ENCODE measurements at regions of chr22 and their contacts with region 1.

Region 1: DNA sequence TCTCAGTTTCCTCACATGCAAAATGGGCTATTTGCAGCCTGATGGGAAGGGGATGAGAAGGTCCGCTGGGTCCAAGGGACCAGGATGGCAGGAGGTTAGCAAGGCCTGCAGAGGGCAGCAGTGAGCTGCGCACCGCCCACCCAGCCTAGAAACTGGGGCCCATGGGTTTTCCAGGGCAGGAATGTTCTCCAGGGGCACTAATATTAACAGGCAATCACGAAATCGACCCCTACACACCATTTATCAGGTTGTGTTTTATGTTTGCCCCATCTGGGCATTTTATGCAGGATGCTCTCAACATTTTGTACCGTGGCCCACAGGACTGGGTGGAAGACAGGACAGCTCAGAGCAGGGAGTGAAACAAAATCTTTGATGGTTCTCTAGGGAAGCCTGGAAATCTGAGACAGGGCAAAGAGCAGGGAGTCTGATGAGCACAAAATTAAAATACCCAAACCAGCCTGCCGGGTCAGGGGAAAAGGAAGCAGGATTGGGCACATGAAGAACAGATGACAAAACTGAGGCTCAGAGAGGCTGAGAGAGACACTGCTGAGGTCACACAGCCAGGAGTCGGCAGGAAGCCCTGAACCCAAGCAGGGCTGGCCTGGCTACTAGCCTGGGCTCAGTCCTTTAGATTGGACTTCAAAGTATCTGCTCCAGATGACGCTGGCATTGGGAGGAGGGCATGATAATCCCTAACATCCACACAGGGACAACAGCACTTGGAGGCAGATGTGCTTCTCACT is 1.6 kb upstream of the BCR start:
- DNase-seq: peak in 4 of 5 donors; percentile 57
- H3K4me3 ChIP-seq: no peak overlapping the region
- H3K4me3 Mint-ChIP-seq: peak overlapping the region; percentile 63 to 84 (median 82)
- H3K27ac ChIP-seq: peak overlapping the region; percentile 27
- H3K27ac Mint-ChIP-seq: peak overlapping the region; percentile 88 to 95 (median 90)
- H3K4me1 ChIP-seq: peaks cover 70% of the 10 kb centered on the region
- H3K4me1 Mint-ChIP-seq: peaks cover 39 to 60% (median 52%) of the 10 kb centered on the region in 4 donors
- H3K27me3 ChIP-seq: no peaks in the 10 kb centered on the region
- H3K27me3 Mint-ChIP-seq: no peaks in the 10 kb centered on the region

Region 2: GRCh38 chr22:23047265-23047664 is 131.4 kb before region 1 on chr22:
- CTCF ChIA-PET with region 1: no interaction called
- POLR2A ChIA-PET with region 1: no interaction called
- intact Hi-C with region 1: no loop called
- DNase-seq: no peak
- H3K4me3 ChIP-seq: no peak overlapping the region
- H3K4me3 Mint-ChIP-seq: no peak overlapping the region
- H3K27ac ChIP-seq: no peak overlapping the region
- H3K27ac Mint-ChIP-seq: no peak overlapping the region
- H3K4me1 ChIP-seq: no peaks in the 10 kb centered on the region
- H3K4me1 Mint-ChIP-seq: no peaks in the 10 kb centered on the region
- H3K27me3 ChIP-seq: no peaks in the 10 kb centered on the region
- H3K27me3 Mint-ChIP-seq: peaks cover 13 to 21% of the 10 kb centered on the region in 2 donors

Region 3: DNA sequence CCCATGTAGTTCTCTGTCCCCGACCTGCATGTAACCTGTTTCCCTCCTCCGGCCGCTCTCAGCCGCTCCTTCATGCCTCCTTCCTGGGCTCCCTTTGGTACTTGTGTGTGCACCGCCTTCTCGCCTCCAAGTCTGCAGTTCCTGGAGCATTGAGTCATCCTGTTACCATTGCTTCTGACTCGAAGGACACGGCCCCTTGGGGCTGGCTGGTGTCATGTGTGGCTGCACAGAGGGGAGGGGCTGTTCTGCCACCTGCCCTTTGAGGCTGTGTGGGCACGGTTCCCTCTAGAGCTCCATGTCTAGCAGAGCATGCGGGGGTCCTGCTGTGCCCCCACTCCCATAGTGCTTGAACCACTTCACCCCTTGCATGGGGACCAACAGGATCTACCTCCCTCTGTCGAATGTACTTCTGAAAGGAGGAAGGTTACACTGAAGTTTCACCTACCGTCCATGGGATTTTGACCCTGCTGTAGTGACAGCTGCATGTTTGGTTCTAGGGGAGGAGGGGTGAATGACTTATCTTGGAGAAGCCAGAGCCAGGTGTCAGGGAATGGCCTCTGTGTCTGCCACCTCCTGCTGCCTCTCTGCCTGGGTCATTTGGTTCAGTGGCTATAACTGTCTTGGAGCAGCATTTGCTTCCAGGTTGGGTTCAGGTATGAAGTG is 41.3 kb after region 1 on chr22:
- CTCF ChIA-PET with region 1: interaction called, 3 read pairs
- POLR2A ChIA-PET with region 1: interaction called, 31 read pairs
- intact Hi-C with region 1: loop called (anchors 5 kb)
- DNase-seq: peak in 3 of 5 donors; percentile 21 to 68 (median 22)
- H3K4me3 ChIP-seq: no peak overlapping the region
- H3K4me3 Mint-ChIP-seq: peak overlapping the region; percentile 71 to 89 (median 84)
- H3K27ac ChIP-seq: peak overlapping the region; percentile 44
- H3K27ac Mint-ChIP-seq: peak overlapping the region; percentile 85 to 96 (median 93)
- H3K4me1 ChIP-seq: peaks cover 100% of the 10 kb centered on the region
- H3K4me1 Mint-ChIP-seq: peaks cover 75 to 100% (median 95%) of the 10 kb centered on the region in 4 donors
- H3K27me3 ChIP-seq: no peaks in the 10 kb centered on the region
- H3K27me3 Mint-ChIP-seq: no peaks in the 10 kb centered on the region

Region 4: DNA sequence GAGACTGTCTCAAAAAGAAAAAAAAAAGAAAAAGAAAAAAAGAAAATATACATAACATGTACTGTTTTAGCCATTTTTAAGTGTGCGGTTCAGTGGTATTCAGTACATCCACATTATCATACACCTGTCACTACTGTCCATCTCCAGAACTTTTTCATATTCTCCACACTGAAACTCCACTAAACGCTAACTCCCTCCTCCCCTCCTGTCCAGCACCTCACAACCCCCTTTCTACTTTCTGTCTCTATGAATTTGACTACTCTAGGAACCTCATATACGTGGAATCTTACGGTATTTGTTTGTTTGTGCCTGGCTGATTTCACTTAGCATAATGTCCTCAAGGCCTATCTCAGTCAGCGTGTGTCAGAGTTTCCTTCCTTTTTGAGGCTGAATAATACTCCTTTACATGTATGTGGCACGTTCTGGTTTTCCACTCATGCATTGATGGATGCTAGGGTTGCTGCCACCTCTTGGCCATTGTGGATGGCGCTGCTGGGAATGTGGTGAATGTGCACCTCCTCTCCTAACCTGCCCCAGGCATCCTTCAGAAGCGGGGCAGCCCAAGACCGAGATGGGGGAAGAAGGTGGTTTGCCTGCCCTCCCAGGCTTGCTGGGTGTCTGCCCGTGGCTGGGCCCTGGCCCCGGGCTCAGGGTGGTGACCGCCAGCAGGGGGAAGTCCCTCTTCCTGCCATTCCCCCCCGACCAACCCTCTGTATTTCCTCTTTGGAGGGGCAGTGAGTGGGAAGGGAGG is 62.1 kb after region 1 on chr22:
- CTCF ChIA-PET with region 1: interaction called, 8 read pairs
- POLR2A ChIA-PET with region 1: interaction called, 17 read pairs
- intact Hi-C with region 1: loop called (anchors 1 kb)
- DNase-seq: peak in 2 of 5 donors; percentile 25 to 66
- H3K4me3 ChIP-seq: no peak overlapping the region
- H3K4me3 Mint-ChIP-seq: peak overlapping the region in 6 of 8 donors; percentile 13 to 69 (median 36)
- H3K27ac ChIP-seq: peak overlapping the region; percentile 73
- H3K27ac Mint-ChIP-seq: peak overlapping the region; percentile 84 to 99 (median 92)
- H3K4me1 ChIP-seq: peaks cover 75% of the 10 kb centered on the region
- H3K4me1 Mint-ChIP-seq: peaks cover 48 to 94% (median 74%) of the 10 kb centered on the region in 4 donors
- H3K27me3 ChIP-seq: no peaks in the 10 kb centered on the region
- H3K27me3 Mint-ChIP-seq: no peaks in the 10 kb centered on the region

Region 5: DNA sequence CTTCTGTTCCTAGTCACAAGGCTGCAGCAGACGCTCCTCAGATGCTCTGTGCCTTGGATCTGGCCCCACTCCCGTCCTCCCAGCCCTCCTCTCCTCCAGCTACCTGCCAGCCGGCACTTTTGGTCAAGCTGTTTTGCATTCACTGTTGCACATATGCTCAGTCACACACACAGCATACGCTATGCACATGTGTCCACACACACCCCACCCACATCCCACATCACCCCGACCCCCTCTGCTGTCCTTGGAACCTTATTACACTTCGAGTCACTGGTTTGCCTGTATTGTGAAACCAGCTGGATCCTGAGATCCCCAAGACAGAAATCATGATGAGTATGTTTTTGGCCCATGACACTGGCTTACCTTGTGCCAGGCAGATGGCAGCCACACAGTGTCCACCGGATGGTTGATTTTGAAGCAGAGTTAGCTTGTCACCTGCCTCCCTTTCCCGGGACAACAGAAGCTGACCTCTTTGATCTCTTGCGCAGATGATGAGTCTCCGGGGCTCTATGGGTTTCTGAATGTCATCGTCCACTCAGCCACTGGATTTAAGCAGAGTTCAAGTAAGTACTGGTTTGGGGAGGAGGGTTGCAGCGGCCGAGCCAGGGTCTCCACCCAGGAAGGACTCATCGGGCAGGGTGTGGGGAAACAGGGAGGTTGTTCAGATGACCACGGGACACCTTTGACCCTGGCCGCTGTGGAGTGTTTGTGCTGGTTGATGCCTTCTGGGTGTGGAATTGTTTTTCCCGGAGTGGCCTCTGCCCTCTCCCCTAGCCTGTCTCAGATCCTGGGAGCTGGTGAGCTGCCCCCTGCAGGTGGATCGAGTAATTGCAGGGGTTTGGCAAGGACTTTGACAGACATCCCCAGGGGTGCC is 111.4 kb after region 1 on chr22:
- CTCF ChIA-PET with region 1: interaction called, 423 read pairs
- POLR2A ChIA-PET with region 1: interaction called, 3 read pairs
- intact Hi-C with region 1: loop called (anchors 1 kb)
- DNase-seq: peak in 4 of 5 donors; percentile 43 to 49 (median 48)
- H3K4me3 ChIP-seq: no peak overlapping the region
- H3K4me3 Mint-ChIP-seq: no peak overlapping the region
- H3K27ac ChIP-seq: no peak overlapping the region
- H3K27ac Mint-ChIP-seq: peak overlapping the region in 4 of 7 donors; percentile 15 to 68 (median 32)
- H3K4me1 ChIP-seq: no peaks in the 10 kb centered on the region
- H3K4me1 Mint-ChIP-seq: no peaks in the 10 kb centered on the region
- H3K27me3 ChIP-seq: no peaks in the 10 kb centered on the region
- H3K27me3 Mint-ChIP-seq: no peaks in the 10 kb centered on the region

Region 6: DNA sequence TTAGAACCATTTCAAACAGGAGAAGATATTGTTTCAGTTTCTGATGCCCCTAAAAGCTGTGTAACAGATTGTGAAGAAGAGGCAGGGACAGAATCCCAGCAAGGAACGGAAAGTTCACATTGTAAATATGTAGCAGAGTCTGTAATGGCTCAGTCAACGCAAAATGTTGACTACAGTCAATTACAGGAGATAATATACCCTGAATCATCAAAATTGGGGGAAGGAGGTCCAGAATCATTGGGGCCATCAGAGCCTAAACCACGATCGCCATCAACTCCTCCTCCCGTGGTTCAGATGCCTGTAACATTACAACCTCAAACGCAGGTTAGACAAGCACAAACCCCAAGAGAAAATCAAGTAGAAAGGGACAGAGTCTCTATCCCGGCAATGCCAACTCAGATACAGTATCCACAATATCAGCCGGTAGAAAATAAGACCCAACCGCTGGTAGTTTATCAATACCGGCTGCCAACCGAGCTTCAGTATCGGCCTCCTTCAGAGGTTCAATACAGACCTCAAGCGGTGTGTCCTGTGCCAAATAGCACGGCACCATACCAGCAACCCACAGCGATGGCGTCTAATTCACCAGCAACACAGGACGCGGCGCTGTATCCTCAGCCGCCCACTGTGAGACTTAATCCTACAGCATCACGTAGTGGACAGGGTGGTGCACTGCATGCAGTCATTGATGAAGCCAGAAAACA is 360.6 kb after region 1 on chr22:
- CTCF ChIA-PET with region 1: no interaction called
- POLR2A ChIA-PET with region 1: no interaction called
- intact Hi-C with region 1: loop called (anchors 10 kb)
- DNase-seq: peak; percentile 67 to 74 (median 70)
- H3K4me3 ChIP-seq: no peak overlapping the region
- H3K4me3 Mint-ChIP-seq: peak overlapping the region in 7 of 8 donors; percentile 29 to 79 (median 51)
- H3K27ac ChIP-seq: no peak overlapping the region
- H3K27ac Mint-ChIP-seq: peak overlapping the region in 3 of 7 donors; percentile 1 to 46 (median 31)
- H3K4me1 ChIP-seq: peaks cover 4% of the 10 kb centered on the region
- H3K4me1 Mint-ChIP-seq: peaks cover 3 to 10% (median 8%) of the 10 kb centered on the region in 4 donors
- H3K27me3 ChIP-seq: no peaks in the 10 kb centered on the region
- H3K27me3 Mint-ChIP-seq: peaks cover 1 to 5% of the 10 kb centered on the region in 2 donors